ENCODE measurements at regions of chr12 and their contacts with region 1.

Region 1: DNA sequence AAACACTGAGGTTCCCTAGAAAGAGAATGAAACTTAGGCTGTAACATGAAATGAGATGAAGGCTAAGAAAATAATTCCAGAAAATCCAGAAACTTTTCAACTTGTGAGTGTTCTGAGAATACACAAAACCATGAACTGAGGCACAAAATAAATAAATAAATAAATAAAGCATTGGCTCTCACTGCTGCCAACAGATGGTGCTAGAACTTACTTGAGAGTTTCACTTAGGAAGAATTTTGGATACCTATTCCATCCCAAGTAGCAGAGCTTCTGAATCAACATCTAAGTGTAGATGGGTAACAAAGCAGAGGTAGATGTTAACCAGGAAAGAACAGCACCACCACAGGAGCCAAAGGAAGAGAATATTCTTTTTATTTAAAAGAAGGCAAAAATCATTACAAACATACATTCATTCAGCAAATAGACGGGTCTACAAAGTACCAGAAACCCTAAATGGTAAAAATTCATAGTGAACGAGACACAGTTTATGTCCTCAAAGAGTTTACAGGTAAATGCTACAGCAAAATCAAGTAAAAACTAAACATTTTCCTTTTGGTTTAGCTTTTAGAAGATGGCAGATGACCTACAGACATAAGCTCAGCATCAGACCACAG is 16.7 kb downstream of the EPS8 start:
- DNase-seq: no peak
- H3K4me3 ChIP-seq: no peak overlapping the region
- H3K27ac ChIP-seq: no peak overlapping the region
- H3K4me1 ChIP-seq: peaks cover 17% of the 10 kb centered on the region; the same call in 1 of the 2 replicates
- H3K27me3 ChIP-seq: no peaks in the 10 kb centered on the region
- CTCF ChIP-seq: peak; percentile 59; the same call in 1 of the 2 replicates

Region 2: DNA sequence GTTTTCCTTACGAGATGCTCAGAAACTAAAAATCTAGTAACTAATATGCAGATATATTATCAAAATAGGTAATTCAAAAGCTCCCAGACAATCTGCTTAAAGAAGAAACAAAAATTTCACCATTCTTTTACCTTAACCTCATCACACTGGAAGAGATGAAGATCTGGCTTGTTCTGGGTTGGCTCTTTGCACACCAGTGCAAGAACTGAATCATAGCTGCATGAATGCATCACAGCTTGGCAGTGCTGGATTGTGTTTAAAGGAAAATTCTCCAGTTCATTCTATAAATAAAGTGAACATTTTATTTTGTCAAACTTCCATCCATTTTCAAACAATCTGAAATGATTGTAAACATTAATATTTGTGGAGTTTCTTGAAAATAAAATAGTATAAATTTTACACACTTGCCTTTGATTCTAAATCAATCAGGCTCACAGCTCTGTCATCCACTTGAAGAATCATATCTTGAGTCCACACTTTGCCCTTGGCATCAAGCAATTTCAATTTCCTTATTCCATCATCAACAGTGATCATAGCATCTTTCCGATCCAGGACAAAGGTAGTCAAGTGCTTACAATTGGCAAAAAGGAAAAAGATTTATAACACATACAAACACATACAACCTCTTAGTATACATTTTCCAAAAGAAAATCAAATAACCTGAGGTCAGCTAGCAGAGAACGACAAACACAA is 103.1 kb before region 1 on chr12:
- CTCF ChIA-PET with region 1: interaction called, 19 read pairs
- POLR2A ChIA-PET with region 1: no interaction called
- intact Hi-C with region 1: no loop called
- DNase-seq: no peak
- H3K4me3 ChIP-seq: no peak overlapping the region
- H3K27ac ChIP-seq: no peak overlapping the region
- H3K4me1 ChIP-seq: no peaks in the 10 kb centered on the region
- H3K27me3 ChIP-seq: no peaks in the 10 kb centered on the region
- CTCF ChIP-seq: no peak

Region 3: DNA sequence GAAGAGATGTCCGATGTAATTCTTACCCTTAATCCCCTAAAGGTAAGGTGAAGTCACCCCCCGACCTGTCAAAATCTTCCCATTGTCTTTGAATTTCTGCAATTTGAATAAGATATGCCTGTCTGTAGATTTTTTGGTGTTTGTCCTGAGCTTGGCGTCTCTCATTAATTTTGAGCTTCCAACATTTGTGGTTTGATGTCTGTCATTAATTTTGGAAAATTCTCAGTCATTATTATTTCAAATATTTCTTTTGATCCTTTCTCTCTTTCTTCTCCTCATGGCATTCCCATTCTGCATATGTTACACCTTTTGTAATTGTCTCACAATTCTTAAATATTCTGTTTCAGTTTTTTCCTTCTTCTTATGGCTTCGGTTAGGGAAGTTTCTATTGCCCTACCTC is 43.4 kb before region 1 on chr12:
- CTCF ChIA-PET with region 1: interaction called, 10 read pairs
- POLR2A ChIA-PET with region 1: no interaction called
- intact Hi-C with region 1: no loop called
- DNase-seq: no peak
- H3K4me3 ChIP-seq: no peak overlapping the region
- H3K27ac ChIP-seq: no peak overlapping the region
- H3K4me1 ChIP-seq: no peaks in the 10 kb centered on the region
- H3K27me3 ChIP-seq: no peaks in the 10 kb centered on the region
- CTCF ChIP-seq: no peak

Region 4: GRCh38 chr12:15754233-15754632 is 18.3 kb before region 1 on chr12:
- CTCF ChIA-PET with region 1: no interaction called
- POLR2A ChIA-PET with region 1: interaction called, 12 read pairs
- intact Hi-C with region 1: no loop called
- DNase-seq: no peak
- H3K4me3 ChIP-seq: no peak overlapping the region
- H3K27ac ChIP-seq: no peak overlapping the region
- H3K4me1 ChIP-seq: peaks cover 21% of the 10 kb centered on the region
- H3K27me3 ChIP-seq: no peaks in the 10 kb centered on the region
- CTCF ChIP-seq: no peak